Dorsolateral prefrontal cortex (tissue), 120 donors: ENCODE measurements at regions of chr15 and their contacts with region 1.

Region 1: GRCh38 chr15:62940755-62941361 is 101.7 kb upstream of the TPM1 start:
- DNase-seq: peak; percentile 36 to 86 (median 72)
- H3K4me3 ChIP-seq: peak overlapping the region in 5 of 59 donors; percentile 7 to 29 (median 11)
- H3K27ac ChIP-seq: peak overlapping the region; percentile 17 to 95 (median 84)
- H3K27me3 ChIP-seq: no peaks in the 10 kb centered on the region
- CTCF ChIP-seq: peak in 1 of 56 donors; percentile 19

Region 2: GRCh38 chr15:62880278-62880677 is 60.6 kb before region 1 on chr15:
- intact Hi-C with region 1: no loop called
- DNase-seq: no peak
- H3K4me3 ChIP-seq: peak overlapping the region in 2 of 59 donors; percentile 7 to 13
- H3K27ac ChIP-seq: no peak overlapping the region
- H3K27me3 ChIP-seq: no peaks in the 10 kb centered on the region
- CTCF ChIP-seq: no peak

Region 3: DNA sequence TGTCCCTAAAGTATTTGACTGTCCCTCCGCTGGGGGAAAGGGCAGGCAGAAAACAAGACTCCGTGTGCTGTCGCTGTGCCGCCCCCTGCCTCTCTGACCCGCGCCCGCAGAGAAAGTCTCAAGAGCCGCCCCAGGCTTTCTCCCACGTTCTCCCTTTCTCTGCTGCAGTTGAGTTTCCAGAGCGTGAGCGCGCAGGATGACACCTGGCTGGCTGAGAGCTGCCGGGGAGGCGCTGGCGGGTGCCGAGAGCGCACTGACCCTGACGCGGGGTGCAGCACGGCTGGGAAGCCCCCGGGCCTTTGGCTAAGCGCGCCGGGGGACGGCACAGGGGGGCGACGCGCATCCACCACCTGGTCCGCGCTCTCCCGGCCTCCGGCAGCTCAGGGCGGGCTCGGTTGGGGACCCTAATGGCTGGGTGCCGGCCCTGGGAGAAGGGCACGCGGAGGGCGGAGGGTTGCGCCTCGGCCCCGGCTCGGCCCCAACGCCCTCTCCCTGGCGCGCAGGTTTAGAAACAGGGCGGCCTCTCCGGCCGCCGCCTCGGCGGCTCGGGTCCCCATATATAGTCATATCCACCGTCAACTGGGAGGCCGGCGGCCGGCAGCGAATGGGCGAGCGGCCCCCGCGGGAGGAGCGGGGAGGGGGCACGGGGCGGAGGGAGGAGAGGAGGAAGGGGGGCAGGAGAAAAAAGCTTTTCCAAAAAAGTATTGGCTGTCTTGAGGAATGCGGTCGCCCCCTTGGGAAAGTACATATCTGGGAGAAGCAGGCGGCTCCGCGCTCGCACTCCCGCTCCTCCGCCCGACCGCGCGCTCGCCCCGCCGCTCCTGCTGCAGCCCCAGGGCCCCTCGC is 101.3 kb after region 1 on chr15 and contains the start of gene TPM1:
- intact Hi-C with region 1: loop called (anchors 5 kb)
- DNase-seq: peak in 6 of 10 donors; percentile 44 to 72 (median 64)
- H3K4me3 ChIP-seq: peak within 1 kb of the TSS; percentile 20 to 95 (median 68)
- H3K27ac ChIP-seq: peak within 1 kb of the TSS in 50 of 59 donors; percentile 26 to 90 (median 70)
- H3K27me3 ChIP-seq: peaks cover 0 to 46% (median 4%) of the 10 kb centered on the region in 45 donors
- CTCF ChIP-seq: peak in 2 of 56 donors; percentile 7 to 22
- total RNA-seq, gene TPM1: 59.9 to 249 (median 139) TPM

Region 4: GRCh38 chr15:63056794-63057193 is 115.9 kb after region 1 on chr15:
- intact Hi-C with region 1: no loop called
- DNase-seq: peak in 9 of 10 donors; percentile 50 to 87 (median 65)
- H3K4me3 ChIP-seq: peak overlapping the region in 1 of 59 donors; percentile 11
- H3K27ac ChIP-seq: peak overlapping the region in 38 of 59 donors; percentile 5 to 95 (median 42)
- H3K27me3 ChIP-seq: no peaks in the 10 kb centered on the region
- CTCF ChIP-seq: peak in 2 of 56 donors; percentile 3 to 23